ENCODE measurements at regions of chr4 and their contacts with region 1.

Region 1: GRCh38 chr4:176850436-176850835 is 57.7 kb upstream of the VEGFC start:
- DNase-seq: no peak
- ATAC-seq: no peak
- H3K4me3 ChIP-seq: no peak overlapping the region
- H3K27ac ChIP-seq: no peak overlapping the region
- H3K4me1 ChIP-seq: no peaks in the 10 kb centered on the region
- H3K27me3 ChIP-seq: no peaks in the 10 kb centered on the region
- CTCF ChIP-seq: no peak
- EP300 ChIP-seq: no peak
- POLR2A ChIP-seq: no peak
- RAD21 ChIP-seq: no peak

Region 2: DNA sequence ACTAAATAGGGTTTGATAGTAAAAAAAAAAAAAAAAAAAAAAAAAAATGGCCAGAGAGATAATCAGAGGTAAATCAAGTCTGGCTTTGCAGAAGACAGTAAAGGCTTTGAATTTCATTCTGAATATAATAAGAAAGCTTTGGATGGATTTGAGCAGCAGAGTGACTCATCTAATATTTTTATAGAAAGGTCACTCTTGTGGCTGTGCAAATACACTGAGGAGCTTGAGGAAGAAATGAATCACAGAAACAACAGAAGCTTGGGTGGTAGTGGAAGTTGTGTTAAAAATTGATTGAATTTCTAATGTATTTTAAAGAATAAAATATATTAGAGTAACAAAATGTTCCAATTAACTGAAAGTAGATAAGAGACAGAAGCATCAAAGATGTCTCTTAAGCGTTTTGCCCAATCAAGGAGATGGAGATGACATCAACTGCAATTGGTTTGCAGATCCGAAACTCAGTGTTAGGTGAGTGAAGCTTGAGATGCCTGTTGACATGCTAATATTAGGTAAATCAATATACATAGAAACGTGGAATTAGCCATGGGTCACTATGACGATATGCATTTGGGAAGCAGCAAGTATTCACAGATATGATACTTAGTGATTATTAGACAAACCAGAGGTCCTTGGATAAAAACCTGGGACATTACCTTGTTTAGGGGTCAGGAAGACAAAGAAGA is 1318.9 kb before region 1 on chr4:
- CTCF ChIA-PET with region 1: no interaction called
- POLR2A ChIA-PET with region 1: no interaction called
- in situ Hi-C with region 1: no loop called
- intact Hi-C with region 1: loop called (anchors 5 kb)
- DNase-seq: no peak
- ATAC-seq: no peak
- H3K4me3 ChIP-seq: no peak overlapping the region
- H3K27ac ChIP-seq: no peak overlapping the region
- H3K4me1 ChIP-seq: no peaks in the 10 kb centered on the region
- H3K27me3 ChIP-seq: no peaks in the 10 kb centered on the region
- CTCF ChIP-seq: no peak
- EP300 ChIP-seq: no peak
- POLR2A ChIP-seq: no peak
- RAD21 ChIP-seq: no peak

Region 3: DNA sequence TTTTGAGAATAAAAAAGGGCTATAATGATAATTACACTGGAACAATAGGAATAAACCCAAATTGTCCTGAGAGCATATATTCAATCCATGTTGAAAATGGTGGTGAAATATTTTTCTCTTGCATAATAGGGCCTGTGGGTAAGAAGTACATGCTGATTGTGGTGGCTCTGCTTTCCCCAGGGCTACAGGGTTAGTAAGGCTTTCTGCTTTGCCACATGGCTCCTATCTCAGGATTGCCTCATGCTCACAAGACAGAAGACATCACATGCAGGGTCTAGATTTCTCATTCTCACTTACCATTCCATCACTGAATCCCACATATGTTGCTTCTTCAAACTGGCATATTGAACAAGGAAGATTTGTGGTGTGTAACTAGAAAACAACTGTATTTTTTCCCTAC is 45.3 kb before region 1 on chr4:
- CTCF ChIA-PET with region 1: no interaction called
- POLR2A ChIA-PET with region 1: no interaction called
- in situ Hi-C with region 1: no loop called
- intact Hi-C with region 1: no loop called
- DNase-seq: no peak
- ATAC-seq: no peak
- H3K4me3 ChIP-seq: no peak overlapping the region
- H3K27ac ChIP-seq: no peak overlapping the region
- H3K4me1 ChIP-seq: no peaks in the 10 kb centered on the region
- H3K27me3 ChIP-seq: no peaks in the 10 kb centered on the region
- CTCF ChIP-seq: no peak
- EP300 ChIP-seq: no peak
- POLR2A ChIP-seq: no peak
- RAD21 ChIP-seq: no peak

Region 4: DNA sequence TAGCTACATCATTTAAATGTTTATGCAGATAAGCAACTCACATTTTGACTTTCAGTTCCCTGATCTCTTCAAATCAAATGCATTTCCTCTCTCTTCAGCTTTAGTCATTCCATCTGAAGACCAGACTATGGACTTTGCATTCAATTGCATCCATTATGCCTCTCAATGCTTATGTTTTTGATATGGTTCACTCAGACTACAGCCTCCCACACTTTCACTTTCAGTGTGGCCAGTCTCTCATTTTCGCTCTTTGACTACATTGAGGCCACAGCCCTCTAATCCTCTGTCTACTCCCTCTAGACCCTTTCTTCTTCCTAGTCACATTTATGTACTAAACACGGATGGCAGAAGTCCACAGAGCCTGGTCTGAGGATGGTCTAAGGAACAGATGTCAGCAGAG is 33.2 kb before region 1 on chr4:
- CTCF ChIA-PET with region 1: no interaction called
- POLR2A ChIA-PET with region 1: no interaction called
- in situ Hi-C with region 1: no loop called
- intact Hi-C with region 1: no loop called
- DNase-seq: no peak
- ATAC-seq: no peak
- H3K4me3 ChIP-seq: no peak overlapping the region
- H3K27ac ChIP-seq: no peak overlapping the region
- H3K4me1 ChIP-seq: no peaks in the 10 kb centered on the region
- H3K27me3 ChIP-seq: no peaks in the 10 kb centered on the region
- CTCF ChIP-seq: no peak
- EP300 ChIP-seq: no peak
- POLR2A ChIP-seq: no peak
- RAD21 ChIP-seq: no peak

Measured in HepG2 (cell line).